Right lobe of liver (tissue), 6 donors: ENCODE measurements at regions of chr17 and their contacts with region 1.

Region 1: GRCh38 chr17:45640141-45640850 is 143.8 kb upstream of the CRHR1 start:
- DNase-seq: peak; percentile 71 to 73 (median 72)
- ATAC-seq: peak; percentile 88 to 93 (median 90)
- H3K4me3 ChIP-seq: no peak overlapping the region
- H3K27ac ChIP-seq: no peak overlapping the region
- H3K4me1 ChIP-seq: no peaks in the 10 kb centered on the region
- H3K27me3 ChIP-seq: no peaks in the 10 kb centered on the region
- CTCF ChIP-seq: peak; percentile 87 to 96 (median 95)
- POLR2A ChIP-seq: no peak

Region 2: GRCh38 chr17:45345554-45346215 is 294.6 kb before region 1 on chr17:
- intact Hi-C with region 1: no loop called
- DNase-seq: no peak
- ATAC-seq: no peak
- H3K4me3 ChIP-seq: no peak overlapping the region
- H3K27ac ChIP-seq: no peak overlapping the region
- H3K4me1 ChIP-seq: no peaks in the 10 kb centered on the region
- H3K27me3 ChIP-seq: no peaks in the 10 kb centered on the region
- CTCF ChIP-seq: no peak
- POLR2A ChIP-seq: no peak

Region 3: GRCh38 chr17:45775576-45776011 is 135.3 kb after region 1 on chr17:
- intact Hi-C with region 1: no loop called
- DNase-seq: peak; percentile 85 to 90 (median 89)
- ATAC-seq: peak; percentile 87 to 95 (median 92)
- H3K4me3 ChIP-seq: no peak overlapping the region
- H3K27ac ChIP-seq: no peak overlapping the region
- H3K4me1 ChIP-seq: peaks cover 0 to 2% (median 0%) of the 10 kb centered on the region in 4 donors
- H3K27me3 ChIP-seq: no peaks in the 10 kb centered on the region
- CTCF ChIP-seq: no peak
- POLR2A ChIP-seq: no peak

Region 4: GRCh38 chr17:45828628-45829027 is 188.3 kb after region 1 on chr17:
- intact Hi-C with region 1: loop called (anchors 5 kb)
- DNase-seq: no peak
- ATAC-seq: no peak
- H3K4me3 ChIP-seq: no peak overlapping the region
- H3K27ac ChIP-seq: no peak overlapping the region
- H3K4me1 ChIP-seq: no peaks in the 10 kb centered on the region
- H3K27me3 ChIP-seq: no peaks in the 10 kb centered on the region
- CTCF ChIP-seq: no peak
- POLR2A ChIP-seq: no peak

Region 5: DNA sequence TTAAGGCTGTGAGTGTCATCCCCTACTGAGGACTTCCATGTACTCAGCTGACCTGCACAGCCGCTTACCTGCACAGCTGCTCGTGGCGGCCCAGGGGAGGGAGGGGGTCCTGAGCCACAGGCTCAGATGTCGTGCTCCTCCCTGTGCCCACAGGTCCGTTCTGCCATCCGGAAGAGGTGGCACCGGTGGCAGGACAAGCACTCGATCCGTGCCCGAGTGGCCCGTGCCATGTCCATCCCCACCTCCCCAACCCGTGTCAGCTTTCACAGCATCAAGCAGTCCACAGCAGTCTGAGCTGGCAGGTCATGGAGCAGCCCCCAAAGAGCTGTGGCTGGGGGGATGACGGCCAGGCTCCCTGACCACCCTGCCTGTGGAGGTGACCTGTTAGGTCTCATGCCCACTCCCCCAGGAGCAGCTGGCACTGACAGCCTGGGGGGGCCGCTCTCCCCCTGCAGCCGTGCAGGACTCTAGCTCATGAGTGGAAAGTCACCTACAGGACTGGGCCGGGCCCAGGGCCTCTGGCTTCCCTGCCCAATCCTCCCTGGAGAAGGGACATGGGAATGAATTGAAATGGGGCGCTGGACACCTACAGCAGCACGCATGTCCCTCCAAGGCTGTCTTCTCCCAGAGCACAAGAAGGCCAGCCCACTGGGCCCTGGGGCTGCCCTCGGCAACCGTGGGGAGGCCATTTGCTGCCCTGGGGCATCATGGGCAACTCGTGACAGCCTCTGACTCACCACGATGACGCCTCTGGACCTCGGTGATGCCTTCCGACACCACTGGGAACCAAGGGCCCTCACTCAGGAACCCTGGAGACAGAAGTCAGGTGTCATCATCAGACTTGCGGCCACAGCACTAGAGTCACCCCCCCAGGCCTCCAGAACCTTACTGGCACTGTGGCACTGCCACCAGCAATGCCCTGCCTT is 194.4 kb after region 1 on chr17:
- intact Hi-C with region 1: loop called (anchors 5 kb)
- DNase-seq: no peak
- ATAC-seq: no peak
- H3K4me3 ChIP-seq: no peak overlapping the region
- H3K27ac ChIP-seq: no peak overlapping the region
- H3K4me1 ChIP-seq: no peaks in the 10 kb centered on the region
- H3K27me3 ChIP-seq: no peaks in the 10 kb centered on the region
- CTCF ChIP-seq: no peak
- POLR2A ChIP-seq: no peak